ENCODE measurements at regions of chr4 and their contacts with region 1.

Region 1: DNA sequence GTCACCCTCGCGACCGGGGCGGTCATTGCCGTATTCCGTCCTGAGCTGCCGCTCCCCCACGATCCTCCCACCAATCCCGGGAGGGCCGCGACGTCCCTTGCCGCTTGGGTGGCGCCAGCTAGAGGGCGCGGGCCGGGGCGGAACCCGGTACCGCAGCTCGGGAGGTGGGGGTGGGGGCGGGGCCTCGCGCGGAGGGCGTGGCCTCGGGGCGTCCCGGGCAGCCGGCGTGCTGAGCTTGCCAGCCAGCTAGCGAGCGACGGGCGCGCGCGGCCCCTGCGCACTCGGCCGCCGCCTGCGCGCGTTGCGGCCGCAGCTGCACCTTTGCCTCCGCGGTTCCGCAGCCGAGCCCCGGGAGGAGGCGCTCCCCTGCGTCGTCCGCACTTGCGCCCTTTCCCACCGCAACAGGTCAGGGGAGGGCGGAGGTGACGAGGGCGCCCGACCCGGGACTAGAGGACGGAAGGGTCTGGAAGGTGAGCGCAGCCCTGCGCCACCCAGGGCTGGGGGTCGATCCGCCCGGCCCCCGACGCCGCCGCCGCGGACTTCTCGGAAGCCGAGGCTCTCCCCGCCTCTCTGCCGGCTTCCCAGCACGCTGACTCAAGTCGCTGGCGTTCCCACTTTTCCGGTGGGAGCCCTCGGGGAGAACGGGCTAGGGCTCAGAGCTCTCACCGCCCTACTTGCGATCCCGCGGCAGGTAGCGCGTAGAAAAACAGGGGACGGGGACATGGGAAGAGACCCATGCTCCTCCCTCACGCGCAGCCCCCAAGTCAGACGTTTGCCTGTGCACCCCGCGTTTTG is at the start of gene AFF1:
- DNase-seq: peak; percentile 93 to 95
- H3K4me3 ChIP-seq: peak within 1 kb of the TSS; percentile 84
- H3K4me3 Mint-ChIP-seq: peak within 1 kb of the TSS; percentile 91
- H3K27ac Mint-ChIP-seq: peak within 1 kb of the TSS; percentile 89
- H3K4me1 ChIP-seq: peaks cover 22% of the 10 kb centered on the region
- H3K4me1 Mint-ChIP-seq: peaks cover 20% of the 10 kb centered on the region
- H3K27me3 ChIP-seq: no peaks in the 10 kb centered on the region
- H3K27me3 Mint-ChIP-seq: no peaks in the 10 kb centered on the region
- CTCF ChIP-seq: peak in 1 of 2 experiments; percentile 44
- total RNA-seq, gene AFF1: 45.2 and 48.3 TPM in 2 replicates

Region 2: DNA sequence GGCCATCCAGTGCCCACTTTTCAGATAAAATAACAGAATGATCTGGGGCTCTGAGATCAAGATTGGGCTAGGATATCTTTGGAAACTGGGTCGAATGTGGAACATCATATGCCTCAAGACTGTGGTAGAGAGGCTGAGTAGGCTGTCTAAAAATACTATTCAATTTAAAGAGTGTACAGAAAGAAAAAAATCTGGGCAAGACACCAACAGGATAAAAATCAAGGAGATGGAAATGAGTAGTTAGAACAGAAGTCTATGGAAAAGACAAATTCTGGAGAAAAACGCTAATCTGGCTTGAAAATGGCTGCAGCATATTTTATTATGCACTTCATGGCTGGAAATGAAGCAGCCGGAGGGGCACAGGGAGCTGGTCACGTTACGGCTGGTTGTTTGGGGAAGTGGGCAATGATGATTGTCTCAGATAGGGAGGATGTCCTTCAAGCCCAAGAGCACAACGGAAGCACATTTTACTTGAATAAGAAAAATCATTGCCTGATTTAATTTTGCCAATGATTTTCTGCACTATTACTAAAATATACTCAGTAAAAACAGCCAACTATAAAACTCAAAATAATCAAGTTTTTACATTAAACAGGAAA is 548.1 kb before region 1 on chr4:
- CTCF ChIA-PET with region 1: no interaction called
- POLR2A ChIA-PET with region 1: no interaction called
- intact Hi-C with region 1: no loop called
- DNase-seq: no peak
- H3K4me3 ChIP-seq: no peak overlapping the region
- H3K4me3 Mint-ChIP-seq: no peak overlapping the region
- H3K27ac Mint-ChIP-seq: no peak overlapping the region
- H3K4me1 ChIP-seq: no peaks in the 10 kb centered on the region
- H3K4me1 Mint-ChIP-seq: no peaks in the 10 kb centered on the region
- H3K27me3 ChIP-seq: no peaks in the 10 kb centered on the region; the same call in 1 of the 2 replicates
- H3K27me3 Mint-ChIP-seq: peaks cover 7% of the 10 kb centered on the region
- CTCF ChIP-seq: no peak

Region 3: GRCh38 chr4:86670739-86671138 is 264.2 kb before region 1 on chr4:
- CTCF ChIA-PET with region 1: no interaction called
- POLR2A ChIA-PET with region 1: interaction called, 10 read pairs
- intact Hi-C with region 1: no loop called
- DNase-seq: no peak
- H3K4me3 ChIP-seq: no peak overlapping the region
- H3K4me3 Mint-ChIP-seq: no peak overlapping the region
- H3K27ac Mint-ChIP-seq: no peak overlapping the region
- H3K4me1 ChIP-seq: no peaks in the 10 kb centered on the region
- H3K4me1 Mint-ChIP-seq: no peaks in the 10 kb centered on the region
- H3K27me3 ChIP-seq: no peaks in the 10 kb centered on the region
- H3K27me3 Mint-ChIP-seq: no peaks in the 10 kb centered on the region
- CTCF ChIP-seq: no peak

Region 4: GRCh38 chr4:87006676-87007527 is 71.9 kb after region 1 on chr4:
- CTCF ChIA-PET with region 1: interaction called, 17 read pairs
- POLR2A ChIA-PET with region 1: interaction called, 38 read pairs
- intact Hi-C with region 1: loop called (anchors 1 kb)
- DNase-seq: peak; percentile 95
- H3K4me3 ChIP-seq: peak overlapping the region; percentile 94
- H3K4me3 Mint-ChIP-seq: peak overlapping the region; percentile 97
- H3K27ac Mint-ChIP-seq: peak overlapping the region; percentile 93
- H3K4me1 ChIP-seq: peaks cover 41% of the 10 kb centered on the region
- H3K4me1 Mint-ChIP-seq: peaks cover 8% of the 10 kb centered on the region
- H3K27me3 ChIP-seq: no peaks in the 10 kb centered on the region
- H3K27me3 Mint-ChIP-seq: no peaks in the 10 kb centered on the region
- CTCF ChIP-seq: peak in 1 of 2 experiments; percentile 30